Ascending aorta (tissue), 2 donors: ENCODE measurements at regions of chr11 and their contacts with region 1.

Region 1: DNA sequence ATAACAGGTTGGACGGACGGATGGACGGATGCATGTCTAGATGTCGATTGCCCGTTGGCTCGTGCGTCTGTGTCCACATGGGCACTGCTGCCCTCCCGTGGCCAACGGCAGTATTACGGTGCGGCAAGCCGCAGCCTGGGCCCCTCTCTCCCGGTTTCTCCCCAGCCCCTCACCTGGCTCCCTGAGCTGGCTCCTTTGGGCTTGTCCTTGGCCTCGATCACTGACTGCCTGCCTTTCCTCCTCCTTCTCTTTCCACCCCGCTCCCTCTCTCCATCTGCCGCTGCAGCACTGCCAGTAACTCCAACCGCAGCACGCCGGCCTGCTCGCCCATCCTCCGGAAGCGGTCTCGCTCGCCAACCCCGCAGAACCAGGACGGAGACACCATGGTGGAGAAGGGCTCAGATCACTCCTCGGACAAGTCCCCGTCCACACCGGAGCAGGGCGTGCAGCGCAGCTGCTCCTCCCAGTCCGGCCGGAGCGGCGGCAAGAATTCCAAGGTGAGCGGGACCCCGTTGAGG is 77.3 kb downstream of the SCN3B start:
- DNase-seq: peak in 1 of 2 donors; percentile 68
- H3K4me3 ChIP-seq: no peak overlapping the region
- H3K27ac ChIP-seq: no peak overlapping the region
- H3K4me1 ChIP-seq: no peaks in the 10 kb centered on the region
- H3K27me3 ChIP-seq: no peaks in the 10 kb centered on the region
- CTCF ChIP-seq: peak; percentile 63 to 75 (median 65)

Region 2: DNA sequence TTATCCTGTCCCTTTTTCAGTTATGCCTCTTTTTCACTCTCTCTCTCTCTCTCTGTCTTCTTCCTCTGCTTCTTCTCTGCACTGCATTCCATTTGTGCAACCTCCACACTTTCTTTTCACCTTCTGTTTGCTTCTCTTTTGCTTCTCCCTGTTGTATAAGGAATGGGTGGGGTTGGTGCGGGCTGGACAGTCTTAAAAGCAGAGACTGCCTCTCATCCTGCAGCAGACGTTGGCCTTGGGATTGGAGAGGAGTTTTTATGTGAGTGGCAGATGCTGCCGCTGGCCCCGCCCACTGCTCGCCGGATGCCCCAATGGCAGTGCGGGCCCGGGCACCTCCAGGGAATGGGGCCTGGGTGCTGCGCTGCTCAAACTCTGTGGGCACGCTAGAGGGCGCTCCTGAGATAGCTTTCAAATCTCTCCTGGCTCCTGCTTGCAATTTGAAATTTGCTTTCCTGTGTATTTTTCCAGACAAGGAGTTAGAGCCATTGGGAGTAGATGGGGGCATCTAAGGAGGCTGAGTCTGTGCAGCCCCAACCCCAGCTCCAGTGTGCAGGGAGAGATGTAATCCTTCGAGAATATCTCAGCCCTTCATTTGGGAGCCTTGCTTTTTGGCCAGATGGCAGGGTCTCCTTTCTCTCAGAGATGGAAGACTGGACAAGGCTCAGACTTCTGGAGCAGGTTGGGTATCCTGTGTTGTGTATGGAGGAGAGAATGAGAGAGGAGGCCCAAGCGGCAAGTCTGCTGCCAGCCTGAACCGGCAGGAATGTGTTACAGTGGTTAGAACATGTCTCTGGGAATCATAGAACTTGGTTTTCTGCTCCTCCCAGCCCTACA is 65.9 kb before region 1 on chr11:
- intact Hi-C with region 1: loop called (anchors 10 kb)
- DNase-seq: peak; percentile 10 to 80
- H3K4me3 ChIP-seq: no peak overlapping the region
- H3K27ac ChIP-seq: no peak overlapping the region
- H3K4me1 ChIP-seq: no peaks in the 10 kb centered on the region
- H3K27me3 ChIP-seq: no peaks in the 10 kb centered on the region
- CTCF ChIP-seq: peak; percentile 47 to 80 (median 75)